H1 (cell line): ENCODE measurements at regions of chr2 and their contacts with region 1.

Region 1: DNA sequence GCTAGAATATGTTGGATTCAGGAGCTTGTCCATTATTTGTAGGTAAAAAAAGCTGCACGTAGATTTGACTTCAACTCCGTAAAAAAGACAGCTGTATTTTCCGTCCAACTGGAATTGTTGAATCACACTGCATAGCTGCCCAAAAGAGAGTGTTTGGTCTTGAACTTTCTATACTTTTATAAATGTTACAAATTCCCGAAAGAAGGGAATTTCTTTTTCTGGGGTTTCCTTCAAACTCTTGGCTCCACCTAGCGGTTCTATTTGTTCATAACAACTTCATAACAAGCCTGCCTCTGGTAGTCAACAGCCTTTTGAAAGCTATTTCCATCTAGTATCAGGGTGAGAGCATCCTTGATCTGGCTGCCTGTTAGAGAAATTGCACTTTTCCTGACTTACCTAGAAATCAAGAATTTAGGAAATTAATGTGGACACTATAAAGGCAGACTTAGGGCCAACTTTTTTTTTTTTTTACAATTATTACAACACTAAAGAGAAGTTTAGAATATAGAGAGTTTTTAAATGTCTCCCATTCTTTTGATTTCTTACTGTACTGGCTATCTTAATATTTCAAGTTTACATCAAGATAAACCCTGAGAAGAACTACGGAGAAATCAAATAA is 48.1 kb downstream of the TMEM185B start:
- DNase-seq: no peak
- H3K4me3 ChIP-seq: no peak overlapping the region
- H3K27ac ChIP-seq: no peak overlapping the region
- H3K4me1 ChIP-seq: peaks cover 0 to 3% (median 0%) of the 10 kb centered on the region in 4 experiments; a peak in 1 of 7 replicates
- H3K27me3 ChIP-seq: no peaks in the 10 kb centered on the region
- CTCF ChIP-seq: peak in 2 of 3 experiments; percentile 43 to 61; a peak in 2 of 4 replicates
- EP300 ChIP-seq: no peak
- POLR2A ChIP-seq: no peak
- RAD21 ChIP-seq: peak; percentile 78 to 83

Region 2: DNA sequence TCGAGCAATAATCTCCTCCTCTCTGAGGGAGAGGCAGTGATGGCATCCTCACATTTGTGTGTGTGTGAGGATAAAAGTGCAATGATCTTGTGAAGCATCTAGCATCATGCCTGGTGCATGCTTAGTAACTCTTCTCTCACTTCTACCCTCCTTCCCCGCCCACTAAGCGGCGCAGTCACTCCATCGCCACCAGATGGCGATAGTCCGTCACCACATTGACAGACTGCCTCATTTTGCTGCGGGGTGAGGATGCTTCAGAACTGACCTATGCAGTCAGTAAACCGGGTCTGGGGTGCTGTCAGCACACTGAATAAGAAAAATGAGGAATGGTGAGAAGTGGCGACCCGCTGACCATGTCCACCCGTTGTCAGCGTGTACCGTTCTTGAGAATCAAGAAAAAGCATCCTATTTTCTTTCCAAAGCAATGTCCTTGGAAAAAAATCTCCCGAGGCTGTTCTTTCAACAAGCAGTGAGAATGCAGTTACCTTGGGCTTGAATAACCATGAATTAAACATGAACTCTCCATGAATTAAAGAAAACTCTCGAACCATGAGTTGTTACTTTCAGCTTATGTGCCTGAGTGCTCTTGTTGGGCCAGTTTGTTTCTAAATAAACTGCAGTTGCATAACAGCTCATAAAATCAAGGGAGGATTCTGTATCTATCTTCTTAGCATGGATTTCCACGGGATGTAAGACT is 533.4 kb before region 1 on chr2:
- CTCF ChIA-PET with region 1: interaction called, 14 read pairs
- POLR2A ChIA-PET with region 1: no interaction called
- DNase-seq: peak; percentile 47 to 86
- H3K4me3 ChIP-seq: no peak overlapping the region
- H3K27ac ChIP-seq: no peak overlapping the region
- H3K4me1 ChIP-seq: peaks cover 0 to 5% (median 2%) of the 10 kb centered on the region in 4 experiments; a peak in 2 of 7 replicates
- H3K27me3 ChIP-seq: no peaks in the 10 kb centered on the region; a peak in 1 of 7 replicates
- CTCF ChIP-seq: peak; percentile 95 to 99 (median 99)
- EP300 ChIP-seq: no peak
- POLR2A ChIP-seq: no peak
- RAD21 ChIP-seq: peak; percentile 92 to 96

Region 3: DNA sequence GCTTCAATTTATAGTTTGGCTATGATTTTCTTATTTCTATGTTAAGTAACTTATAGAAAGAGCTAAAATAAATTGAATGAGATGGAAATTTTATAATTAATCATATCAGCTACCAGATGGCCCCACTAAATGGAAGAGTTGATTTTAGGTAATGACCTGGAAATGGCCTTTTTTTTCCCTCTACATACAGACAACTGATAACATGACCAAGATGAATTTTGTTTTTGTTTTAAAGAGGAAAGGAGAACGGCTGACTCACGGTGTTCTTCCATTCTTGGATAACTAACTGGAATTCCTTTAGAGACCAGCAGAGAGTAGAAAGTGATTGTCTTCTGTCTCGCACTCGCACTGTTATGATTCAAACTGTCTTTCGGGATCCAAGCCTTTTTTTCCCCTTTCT is 42.9 kb before region 1 on chr2:
- CTCF ChIA-PET with region 1: interaction called, 11 read pairs
- POLR2A ChIA-PET with region 1: interaction called, 4 read pairs
- DNase-seq: no peak
- H3K4me3 ChIP-seq: no peak overlapping the region
- H3K27ac ChIP-seq: no peak overlapping the region
- H3K4me1 ChIP-seq: peaks cover 0 to 3% (median 0%) of the 10 kb centered on the region in 4 experiments; a peak in 3 of 7 replicates
- H3K27me3 ChIP-seq: no peaks in the 10 kb centered on the region
- CTCF ChIP-seq: no peak
- EP300 ChIP-seq: no peak
- POLR2A ChIP-seq: no peak
- RAD21 ChIP-seq: no peak

Region 4: DNA sequence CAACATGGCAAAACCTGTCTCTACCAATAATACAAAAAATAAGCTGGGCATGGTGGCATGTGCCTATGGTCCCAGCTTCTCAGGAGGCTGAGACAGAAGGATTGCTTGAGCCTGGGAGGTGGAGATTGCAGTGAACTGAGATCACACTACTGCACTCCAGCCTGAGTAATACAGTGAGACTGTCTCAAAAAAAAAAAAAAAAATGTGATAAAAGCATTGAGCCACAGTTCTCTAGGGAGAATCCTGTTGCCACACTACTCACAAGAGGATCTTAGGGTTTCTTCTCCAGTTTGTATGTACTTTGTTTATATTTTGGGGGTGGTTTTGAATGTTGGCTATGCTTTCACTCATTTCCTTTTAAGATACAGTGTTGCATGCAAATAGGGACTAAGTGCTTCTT is 13.9 kb before region 1 on chr2:
- CTCF ChIA-PET with region 1: interaction called, 18 read pairs
- POLR2A ChIA-PET with region 1: no interaction called
- DNase-seq: no peak
- H3K4me3 ChIP-seq: no peak overlapping the region
- H3K27ac ChIP-seq: no peak overlapping the region
- H3K4me1 ChIP-seq: no peaks in the 10 kb centered on the region
- H3K27me3 ChIP-seq: no peaks in the 10 kb centered on the region
- CTCF ChIP-seq: no peak
- EP300 ChIP-seq: no peak
- POLR2A ChIP-seq: no peak
- RAD21 ChIP-seq: no peak

Region 5: GRCh38 chr2:120195553-120195952 is 20.5 kb after region 1 on chr2:
- CTCF ChIA-PET with region 1: interaction called, 15 read pairs
- POLR2A ChIA-PET with region 1: no interaction called
- DNase-seq: no peak
- H3K4me3 ChIP-seq: no peak overlapping the region
- H3K27ac ChIP-seq: no peak overlapping the region
- H3K4me1 ChIP-seq: no peaks in the 10 kb centered on the region
- H3K27me3 ChIP-seq: no peaks in the 10 kb centered on the region
- CTCF ChIP-seq: no peak
- EP300 ChIP-seq: no peak
- POLR2A ChIP-seq: no peak
- RAD21 ChIP-seq: no peak